CD8-positive, alpha-beta T cell (primary cell): ENCODE measurements at regions of chr5 and their contacts with region 1.

Region 1: GRCh38 chr5:128083033-128083810 is at the start of gene SLC12A2:
- DNase-seq: peak; percentile 81 to 98 (median 91)
- ATAC-seq: peak; percentile 69
- H3K4me3 ChIP-seq: peak within 1 kb of the TSS; percentile 73 to 86
- H3K4me3 Mint-ChIP-seq: peak within 1 kb of the TSS; percentile 93
- H3K27ac ChIP-seq: peak within 1 kb of the TSS; percentile 89 to 90
- H3K27ac Mint-ChIP-seq: peak within 1 kb of the TSS; percentile 95
- H3K4me1 ChIP-seq: peaks cover 48% of the 10 kb centered on the region
- H3K4me1 Mint-ChIP-seq: peaks cover 70% of the 10 kb centered on the region
- H3K27me3 ChIP-seq: no peaks in the 10 kb centered on the region
- H3K27me3 Mint-ChIP-seq: no peaks in the 10 kb centered on the region
- CTCF ChIP-seq: no peak
- total RNA-seq, gene SLC12A2: 12.6 to 12.8 TPM

Region 2: GRCh38 chr5:126422989-126423788 is 1660.0 kb before region 1 on chr5 and contains the start of gene GRAMD2B:
- CTCF ChIA-PET with region 1: no interaction called
- POLR2A ChIA-PET with region 1: interaction called, 4 read pairs
- intact Hi-C with region 1: loop called in 1 of 2 experiments (anchors 5 kb)
- DNase-seq: peak; percentile 34 to 90 (median 65)
- ATAC-seq: peak; percentile 93
- H3K4me3 ChIP-seq: peak within 1 kb of the TSS; percentile 78 to 84
- H3K4me3 Mint-ChIP-seq: peak within 1 kb of the TSS; percentile 91
- H3K27ac ChIP-seq: peak within 1 kb of the TSS; percentile 90 to 95
- H3K27ac Mint-ChIP-seq: peak within 1 kb of the TSS; percentile 95
- H3K4me1 ChIP-seq: peaks cover 21% of the 10 kb centered on the region
- H3K4me1 Mint-ChIP-seq: peaks cover 38% of the 10 kb centered on the region
- H3K27me3 ChIP-seq: no peaks in the 10 kb centered on the region
- H3K27me3 Mint-ChIP-seq: no peaks in the 10 kb centered on the region
- CTCF ChIP-seq: no peak
- total RNA-seq, gene GRAMD2B: 8.2 to 10.4 TPM

Region 3: GRCh38 chr5:126852091-126852571 is 1231.1 kb before region 1 on chr5:
- CTCF ChIA-PET with region 1: no interaction called
- POLR2A ChIA-PET with region 1: no interaction called
- intact Hi-C with region 1: loop called (anchors 5 kb)
- DNase-seq: peak in 5 of 9 experiments; percentile 19 to 65 (median 48)
- ATAC-seq: peak; percentile 70
- H3K4me3 ChIP-seq: peak overlapping the region; percentile 1 to 47
- H3K4me3 Mint-ChIP-seq: peak overlapping the region; percentile 88
- H3K27ac ChIP-seq: peak overlapping the region; percentile 56 to 59
- H3K27ac Mint-ChIP-seq: peak overlapping the region; percentile 98
- H3K4me1 ChIP-seq: peaks cover 38% of the 10 kb centered on the region
- H3K4me1 Mint-ChIP-seq: peaks cover 70% of the 10 kb centered on the region
- H3K27me3 ChIP-seq: no peaks in the 10 kb centered on the region
- H3K27me3 Mint-ChIP-seq: no peaks in the 10 kb centered on the region
- CTCF ChIP-seq: no peak

Region 4: DNA sequence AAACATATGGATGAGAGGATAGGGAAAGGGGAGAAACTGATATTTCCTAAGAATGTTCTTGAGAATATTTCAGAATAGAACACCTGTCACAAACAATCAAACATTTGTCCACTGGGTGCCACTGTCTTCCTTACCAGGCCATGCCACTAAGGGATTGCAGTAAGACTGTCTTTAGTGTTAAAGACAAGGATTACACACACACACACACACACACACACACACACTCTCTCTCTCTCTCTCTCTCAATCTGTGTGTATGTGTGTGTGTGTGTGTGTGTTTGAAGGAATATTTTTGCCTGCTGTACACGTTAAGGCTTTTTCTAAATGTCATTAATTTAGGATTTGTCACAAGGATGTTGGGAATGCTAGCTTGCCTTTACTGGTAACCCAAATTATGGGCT is 325.6 kb before region 1 on chr5:
- CTCF ChIA-PET with region 1: no interaction called
- POLR2A ChIA-PET with region 1: interaction called, 3 read pairs
- intact Hi-C with region 1: loop called in 1 of 2 experiments (anchors 10 kb)
- DNase-seq: peak in 2 of 9 experiments; percentile 36 to 37
- ATAC-seq: peak; percentile 51
- H3K4me3 ChIP-seq: no peak overlapping the region
- H3K4me3 Mint-ChIP-seq: no peak overlapping the region
- H3K27ac ChIP-seq: no peak overlapping the region
- H3K27ac Mint-ChIP-seq: no peak overlapping the region
- H3K4me1 ChIP-seq: no peaks in the 10 kb centered on the region
- H3K4me1 Mint-ChIP-seq: no peaks in the 10 kb centered on the region
- H3K27me3 ChIP-seq: no peaks in the 10 kb centered on the region
- H3K27me3 Mint-ChIP-seq: peaks cover 1% of the 10 kb centered on the region
- CTCF ChIP-seq: no peak

Region 5: DNA sequence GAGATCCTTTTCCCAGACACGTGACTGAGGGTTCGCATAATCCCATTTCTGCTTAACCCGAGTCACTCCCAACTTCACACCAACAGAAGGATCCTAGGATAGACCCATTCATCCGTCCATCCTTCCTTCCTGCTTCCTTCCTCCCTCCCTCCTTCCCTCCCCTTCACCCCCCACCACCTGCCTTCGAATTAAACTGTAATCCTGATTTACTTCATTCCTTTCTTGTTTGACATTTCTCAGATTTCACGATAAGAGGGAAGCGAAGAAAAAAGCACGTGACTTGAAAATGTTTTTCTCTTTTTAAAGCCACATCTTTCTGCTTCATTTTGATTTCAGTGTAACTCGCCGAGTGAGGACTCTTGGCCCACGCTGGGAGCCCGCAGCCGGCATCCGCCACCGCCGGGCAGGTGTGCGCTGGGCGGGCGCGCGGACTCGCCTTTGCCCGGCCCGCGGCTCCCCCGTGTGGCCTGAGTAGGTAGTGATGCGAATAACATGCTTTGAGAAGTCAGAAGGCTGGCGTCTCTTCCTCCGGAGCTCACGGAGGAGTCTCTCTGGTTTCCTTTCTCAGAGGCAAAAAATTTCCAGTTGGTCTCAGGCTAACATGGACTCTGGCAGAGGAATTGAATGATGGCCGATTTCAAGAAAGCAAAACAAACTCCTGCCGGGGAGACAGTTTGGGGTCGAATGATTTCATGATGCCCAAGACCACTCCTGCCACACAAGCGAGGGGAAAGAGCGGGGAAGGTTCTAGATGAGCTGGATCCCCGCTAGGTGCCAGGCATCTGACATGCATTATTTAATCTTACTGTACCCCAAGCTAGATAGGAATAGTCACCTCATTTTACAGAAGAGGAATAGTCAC is 118.1 kb after region 1 on chr5:
- CTCF ChIA-PET with region 1: no interaction called
- POLR2A ChIA-PET with region 1: no interaction called
- intact Hi-C with region 1: loop called (anchors 2 kb)
- DNase-seq: peak; percentile 65 to 91 (median 80)
- ATAC-seq: peak; percentile 77
- H3K4me3 ChIP-seq: no peak overlapping the region
- H3K4me3 Mint-ChIP-seq: peak overlapping the region; percentile 61
- H3K27ac ChIP-seq: no peak overlapping the region
- H3K27ac Mint-ChIP-seq: no peak overlapping the region
- H3K4me1 ChIP-seq: peaks cover 22% of the 10 kb centered on the region
- H3K4me1 Mint-ChIP-seq: peaks cover 35% of the 10 kb centered on the region
- H3K27me3 ChIP-seq: peaks cover 0 to 2% of the 10 kb centered on the region in 2 experiments
- H3K27me3 Mint-ChIP-seq: peaks cover 9% of the 10 kb centered on the region
- CTCF ChIP-seq: peak; percentile 96